ENCODE measurements at regions of chr16 and their contacts with region 1.

Region 1: DNA sequence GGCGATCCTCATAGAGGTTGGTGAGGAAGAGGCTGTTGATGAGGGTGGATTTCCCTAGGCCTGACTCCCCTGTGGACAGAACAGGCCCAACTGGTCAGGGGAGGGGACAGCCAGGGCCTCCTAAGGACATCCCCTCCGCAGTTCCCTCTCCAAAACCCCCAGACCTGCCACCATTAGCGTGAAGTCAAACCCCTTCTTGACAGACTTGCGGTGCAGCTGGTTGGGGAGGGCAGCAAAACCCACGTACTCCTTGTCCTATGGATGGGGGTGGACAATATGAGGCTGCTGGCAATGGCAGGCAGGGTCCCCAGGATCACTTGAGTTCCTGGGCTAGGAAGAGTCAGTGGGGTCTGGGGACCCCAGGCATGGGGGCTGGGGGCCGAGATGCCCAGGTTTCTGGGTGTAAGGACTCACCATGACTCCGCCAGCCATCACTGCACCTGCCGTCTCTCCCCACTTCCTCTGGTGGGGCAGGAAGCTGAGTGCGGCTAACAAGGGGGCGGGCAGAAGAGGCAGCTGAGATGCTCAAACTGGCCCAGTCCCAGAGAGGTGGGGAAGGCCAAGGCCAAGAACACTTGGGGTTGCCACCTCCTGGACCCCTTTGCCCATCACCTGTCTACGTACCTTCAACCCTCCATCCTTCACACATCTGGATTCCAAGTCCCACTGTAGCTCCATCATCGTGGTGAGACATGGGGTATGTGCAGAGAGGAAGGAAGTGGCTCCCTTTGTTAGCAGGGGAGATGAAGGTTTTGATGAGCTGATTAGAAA is at the start of gene SEPTIN1:
- DNase-seq: peak; percentile 89
- ATAC-seq: peak; percentile 40
- H3K4me3 Mint-ChIP-seq: peak within 1 kb of the TSS; percentile 84
- H3K27ac Mint-ChIP-seq: peak within 1 kb of the TSS; percentile 98
- H3K4me1 Mint-ChIP-seq: peaks cover 37% of the 10 kb centered on the region
- H3K27me3 Mint-ChIP-seq: no peaks in the 10 kb centered on the region
- CTCF ChIP-seq: no peak
- total RNA-seq, gene SEPTIN1: 163 to 169 TPM

Region 2: DNA sequence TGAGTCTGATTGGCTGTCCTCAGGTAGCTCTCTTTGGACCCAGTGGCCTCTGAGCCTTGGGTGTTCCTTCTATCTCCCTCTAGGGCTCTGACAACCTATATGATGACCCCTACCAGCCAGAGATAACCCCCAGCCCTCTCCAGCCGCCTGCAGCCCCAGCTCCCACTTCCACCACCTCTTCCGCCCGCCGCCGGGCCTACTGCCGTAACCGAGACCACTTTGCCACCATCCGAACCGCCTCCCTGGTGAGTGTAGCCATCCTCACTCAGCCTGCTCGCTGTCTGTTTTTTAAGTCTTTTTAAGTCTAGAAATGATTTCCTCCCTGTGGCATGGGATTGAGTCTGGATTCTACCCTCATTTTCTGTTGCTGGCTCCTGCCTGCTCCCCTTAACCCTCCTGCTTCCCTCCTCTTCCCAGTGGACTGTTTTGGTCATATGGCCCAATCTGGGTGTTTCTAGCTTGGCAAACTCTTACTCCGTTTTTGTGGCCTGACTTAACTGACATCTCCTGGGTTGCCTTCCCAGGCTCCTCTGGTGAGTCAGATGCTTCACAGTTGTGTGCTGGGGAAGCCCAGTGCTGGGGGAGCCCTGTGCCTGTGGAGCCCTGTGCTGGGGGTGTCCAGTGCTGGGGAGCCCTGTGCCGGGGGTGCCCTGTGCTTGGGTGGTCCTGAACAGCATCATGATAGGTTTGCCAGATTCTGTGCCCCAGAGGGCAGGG is 398.7 kb before region 1 on chr16:
- CTCF ChIA-PET with region 1: no interaction called
- POLR2A ChIA-PET with region 1: no interaction called
- intact Hi-C with region 1: no loop called
- DNase-seq: no peak
- ATAC-seq: no peak
- H3K4me3 Mint-ChIP-seq: no peak overlapping the region
- H3K27ac Mint-ChIP-seq: no peak overlapping the region
- H3K4me1 Mint-ChIP-seq: no peaks in the 10 kb centered on the region
- H3K27me3 Mint-ChIP-seq: no peaks in the 10 kb centered on the region
- CTCF ChIP-seq: no peak

Region 3: GRCh38 chr16:30355144-30355894 is 27.0 kb before region 1 on chr16 and contains the start of gene CD2BP2:
- CTCF ChIA-PET with region 1: interaction called, 3 read pairs
- POLR2A ChIA-PET with region 1: interaction called, 14 read pairs
- intact Hi-C with region 1: no loop called
- DNase-seq: peak; percentile 93
- ATAC-seq: peak; percentile 82
- H3K4me3 Mint-ChIP-seq: peak within 1 kb of the TSS; percentile 97
- H3K27ac Mint-ChIP-seq: peak within 1 kb of the TSS; percentile 93
- H3K4me1 Mint-ChIP-seq: peaks cover 50% of the 10 kb centered on the region
- H3K27me3 Mint-ChIP-seq: no peaks in the 10 kb centered on the region
- CTCF ChIP-seq: no peak
- total RNA-seq, gene CD2BP2: 43.8 to 44.5 TPM

Region 4: GRCh38 chr16:30370444-30371247 is 11.7 kb before region 1 on chr16 and contains the start of gene TBC1D10B:
- CTCF ChIA-PET with region 1: interaction called, 3 read pairs
- POLR2A ChIA-PET with region 1: interaction called, 14 read pairs
- intact Hi-C with region 1: no loop called
- DNase-seq: peak; percentile 99
- ATAC-seq: peak; percentile 87
- H3K4me3 Mint-ChIP-seq: peak within 1 kb of the TSS; percentile 95
- H3K27ac Mint-ChIP-seq: peak within 1 kb of the TSS; percentile 92
- H3K4me1 Mint-ChIP-seq: peaks cover 35% of the 10 kb centered on the region
- H3K27me3 Mint-ChIP-seq: no peaks in the 10 kb centered on the region
- CTCF ChIP-seq: no peak
- total RNA-seq, gene TBC1D10B: 39.7 to 41.3 TPM

Region 5: DNA sequence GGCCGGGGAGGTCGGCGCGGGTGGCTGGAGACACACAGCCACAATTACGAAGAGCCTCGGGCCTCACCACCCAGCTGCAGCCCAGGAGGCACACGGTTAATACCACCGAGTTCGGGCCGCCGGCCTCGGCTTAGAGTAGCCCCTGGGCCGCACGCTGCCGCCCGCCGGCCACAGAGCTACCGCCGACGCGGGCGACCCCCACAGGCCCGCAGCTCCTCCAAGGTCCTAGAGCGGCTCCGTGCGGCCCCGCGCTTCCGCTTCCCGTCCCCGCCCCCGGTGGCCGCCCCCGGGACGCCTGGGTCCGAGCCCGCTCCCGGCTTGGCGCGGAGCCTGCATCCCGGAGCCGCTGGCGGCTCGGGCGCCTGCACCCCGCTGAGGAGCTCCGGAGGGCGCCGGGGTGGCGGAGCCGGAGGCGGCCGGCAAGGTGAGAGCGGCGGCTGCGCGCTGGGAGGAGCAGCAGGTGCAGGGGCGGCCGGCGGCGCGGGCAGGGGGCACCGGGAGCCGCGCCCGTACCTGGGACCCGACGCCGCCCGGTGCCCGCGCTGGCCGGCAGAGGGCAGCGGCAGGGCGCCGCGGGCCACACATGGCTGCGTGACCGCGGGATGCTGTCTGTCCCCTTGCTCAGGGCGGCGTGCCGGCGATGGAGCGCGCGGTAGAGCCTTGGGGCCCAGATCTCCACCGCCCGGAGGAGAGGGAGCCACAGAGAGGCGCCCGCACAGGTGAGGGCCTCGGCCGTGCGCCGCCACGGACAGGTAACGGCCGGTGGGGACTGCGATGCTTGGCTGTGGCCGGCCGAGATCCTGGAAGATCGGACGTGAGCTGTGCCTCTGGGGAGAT is 13.1 kb after region 1 on chr16 and contains the start of gene ZNF48:
- CTCF ChIA-PET with region 1: interaction called, 30 read pairs
- POLR2A ChIA-PET with region 1: interaction called, 23 read pairs
- intact Hi-C with region 1: no loop called
- DNase-seq: peak; percentile 49
- ATAC-seq: peak; percentile 61
- H3K4me3 Mint-ChIP-seq: peak within 1 kb of the TSS; percentile 83
- H3K27ac Mint-ChIP-seq: peak within 1 kb of the TSS; percentile 83
- H3K4me1 Mint-ChIP-seq: peaks cover 37% of the 10 kb centered on the region
- H3K27me3 Mint-ChIP-seq: no peaks in the 10 kb centered on the region
- CTCF ChIP-seq: peak; percentile 32
- total RNA-seq, gene ZNF48: 10.4 to 10.9 TPM

Region 6: GRCh38 chr16:30458561-30459394 is 76.5 kb after region 1 on chr16:
- CTCF ChIA-PET with region 1: no interaction called
- POLR2A ChIA-PET with region 1: no interaction called
- intact Hi-C with region 1: no loop called
- DNase-seq: peak; percentile 97
- ATAC-seq: peak; percentile 95
- H3K4me3 Mint-ChIP-seq: peak overlapping the region; percentile 62
- H3K27ac Mint-ChIP-seq: peak overlapping the region; percentile 98
- H3K4me1 Mint-ChIP-seq: peaks cover 67% of the 10 kb centered on the region
- H3K27me3 Mint-ChIP-seq: no peaks in the 10 kb centered on the region
- CTCF ChIP-seq: no peak

Measured in activated CD8-positive, alpha-beta T cell treated with anti-CD3 and anti-CD28 coated beads for 36 hours (primary cell).